ENCODE measurements at regions of chr1 and their contacts with region 1.

Region 1: GRCh38 chr1:43073490-43074230 is 98.4 kb downstream of the EBNA1BP2 start:
- DNase-seq: peak; percentile 81
- ATAC-seq: peak; percentile 91
- H3K4me3 Mint-ChIP-seq: no peak overlapping the region
- H3K27ac Mint-ChIP-seq: peak overlapping the region; percentile 63
- H3K4me1 Mint-ChIP-seq: peaks cover 4% of the 10 kb centered on the region
- H3K27me3 Mint-ChIP-seq: no peaks in the 10 kb centered on the region

Region 2: GRCh38 chr1:42766741-42767509 is 306.7 kb before region 1 on chr1 and contains the starts of genes C1orf50 and P3H1:
- CTCF ChIA-PET with region 1: interaction called, 21 read pairs
- DNase-seq: peak; percentile 100
- ATAC-seq: peak; percentile 94
- H3K4me3 Mint-ChIP-seq: no peak within 1 kb of the TSS
- H3K27ac Mint-ChIP-seq: no peak within 1 kb of the TSS
- H3K4me1 Mint-ChIP-seq: peaks cover 30% of the 10 kb centered on the region
- H3K27me3 Mint-ChIP-seq: no peaks in the 10 kb centered on the region
- total RNA-seq, gene C1orf50: 4.6 to 10.3 TPM
- total RNA-seq, gene P3H1: 48.1 to 54.0 TPM

Region 3: DNA sequence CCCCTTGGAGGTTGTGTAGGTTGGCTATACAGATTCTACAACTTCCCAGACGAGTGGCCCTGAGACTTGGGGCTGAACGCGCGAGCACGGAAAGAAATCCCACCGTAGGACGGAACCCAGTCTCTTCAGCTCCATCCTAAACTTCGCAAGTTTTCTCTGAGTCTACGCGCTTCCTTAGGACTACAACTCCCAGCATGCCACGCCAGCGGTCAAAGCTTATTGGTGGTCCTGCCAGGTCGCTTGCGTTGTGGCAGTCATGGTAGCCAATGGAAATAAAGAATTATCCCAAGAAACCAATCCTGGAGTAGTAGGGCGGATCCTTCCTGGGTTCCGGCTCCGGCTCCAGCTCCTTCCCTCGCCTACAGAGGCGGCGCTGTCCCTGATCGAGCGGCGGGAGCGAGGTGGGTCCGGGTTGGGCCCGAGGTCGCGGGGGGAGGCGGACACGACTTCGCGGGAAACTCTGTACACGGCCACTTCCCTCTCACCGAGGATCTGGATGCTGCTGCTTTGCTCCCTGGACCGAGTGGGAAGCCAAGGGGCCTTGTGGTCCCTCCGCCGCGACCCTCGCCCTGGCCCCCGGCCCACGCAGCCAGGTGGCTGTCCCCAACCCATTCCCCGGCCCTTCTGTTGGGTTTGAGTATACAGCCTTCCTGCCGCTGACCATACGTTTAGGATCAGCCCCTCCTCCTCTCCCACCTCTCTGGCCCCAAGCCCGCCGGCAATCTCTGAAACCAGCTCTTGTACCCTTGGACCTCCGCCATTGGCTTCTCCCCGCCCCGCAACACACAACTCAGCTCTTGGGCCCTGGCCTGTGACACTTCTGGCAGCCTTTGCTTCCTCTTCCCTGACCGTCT is 227.2 kb before region 1 on chr1 and contains the start of gene ZNF691:
- CTCF ChIA-PET with region 1: interaction called, 19 read pairs
- DNase-seq: peak; percentile 96
- ATAC-seq: peak; percentile 98
- H3K4me3 Mint-ChIP-seq: peak within 1 kb of the TSS; percentile 91
- H3K27ac Mint-ChIP-seq: peak within 1 kb of the TSS; percentile 81
- H3K4me1 Mint-ChIP-seq: peaks cover 34% of the 10 kb centered on the region
- H3K27me3 Mint-ChIP-seq: no peaks in the 10 kb centered on the region
- total RNA-seq, gene ZNF691: 9.8 to 13.9 TPM

Region 4: DNA sequence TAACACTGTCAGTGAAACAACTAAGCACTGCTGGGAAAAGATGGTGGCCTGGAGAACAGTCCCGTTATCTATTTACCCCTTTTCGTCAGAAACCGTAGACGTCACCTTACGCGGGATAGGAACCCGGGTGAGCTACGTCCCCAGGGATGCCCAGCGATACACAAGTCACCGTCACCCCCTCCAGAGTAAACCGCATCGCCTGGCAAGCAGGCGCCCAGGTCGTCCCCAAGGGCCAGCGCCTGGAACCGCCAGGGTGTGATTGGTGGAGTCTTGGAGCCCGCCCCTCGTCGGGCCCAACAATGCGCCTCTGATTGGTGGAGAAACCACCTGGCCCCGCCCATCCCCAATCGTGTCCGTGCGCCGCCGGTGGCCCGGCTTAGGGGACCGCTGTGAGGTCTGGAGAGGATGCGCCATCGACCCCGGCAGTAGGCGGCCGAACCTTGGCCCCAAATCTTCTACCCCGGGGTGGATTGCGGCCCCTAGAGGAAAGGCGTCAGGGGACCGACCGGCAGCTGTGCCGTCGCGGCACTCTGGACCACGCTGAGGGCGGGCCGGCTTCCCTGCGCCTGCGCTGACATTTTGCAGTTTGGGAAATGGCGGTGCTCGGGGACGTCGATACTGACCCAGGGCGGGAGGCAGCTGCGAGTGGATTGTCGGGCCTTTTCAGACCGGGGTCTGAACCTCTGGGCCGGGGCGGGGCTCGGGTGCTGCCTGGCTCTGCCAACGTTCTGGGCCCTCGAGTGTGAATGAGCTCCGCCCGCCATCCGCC is 149.4 kb before region 1 on chr1:
- CTCF ChIA-PET with region 1: interaction called, 275 read pairs
- DNase-seq: peak; percentile 96
- ATAC-seq: peak; percentile 93
- H3K4me3 Mint-ChIP-seq: peak overlapping the region; percentile 86
- H3K27ac Mint-ChIP-seq: peak overlapping the region; percentile 88
- H3K4me1 Mint-ChIP-seq: peaks cover 48% of the 10 kb centered on the region
- H3K27me3 Mint-ChIP-seq: no peaks in the 10 kb centered on the region

Region 5: DNA sequence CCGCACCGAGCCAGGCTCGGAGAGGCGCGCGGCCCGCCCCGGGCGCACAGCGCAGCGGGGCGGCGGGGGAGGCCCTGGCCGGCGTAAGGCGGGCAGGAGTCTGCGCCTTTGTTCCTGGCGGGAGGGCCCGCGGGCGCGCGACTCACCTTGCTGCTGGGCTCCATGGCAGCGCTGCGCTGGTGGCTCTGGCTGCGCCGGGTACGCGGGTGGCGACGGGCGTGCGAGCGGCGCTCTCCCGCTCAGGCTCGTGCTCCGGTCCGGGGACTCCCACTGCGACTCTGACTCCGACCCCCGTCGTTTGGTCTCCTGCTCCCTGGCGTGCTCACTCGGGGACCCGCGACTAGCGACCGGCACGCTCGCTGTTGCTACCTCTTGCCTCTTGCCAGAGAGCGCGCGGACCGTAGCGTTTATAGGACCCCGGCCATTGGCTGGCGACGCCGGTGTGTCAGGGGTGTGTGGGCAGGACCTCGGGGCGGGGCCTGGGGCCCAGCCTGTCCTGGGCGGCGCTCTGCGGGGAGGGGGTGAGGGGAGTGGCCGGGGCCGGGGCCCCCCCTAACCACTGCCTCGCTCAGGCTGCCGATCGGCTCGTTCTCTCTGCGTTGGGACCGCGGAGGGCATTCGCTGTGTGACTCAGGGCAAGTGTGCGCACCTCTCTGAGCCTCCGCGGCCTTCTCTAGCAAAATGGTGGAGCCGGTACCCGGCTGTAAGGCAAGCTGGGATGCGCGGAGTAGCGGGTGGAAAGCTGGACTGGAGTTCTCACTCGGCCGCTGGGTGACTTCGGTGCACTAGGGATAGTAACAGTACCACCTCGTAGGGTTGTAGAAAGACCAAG is 115.0 kb before region 1 on chr1 and contains the start of gene SLC2A1:
- CTCF ChIA-PET with region 1: interaction called, 26 read pairs
- DNase-seq: peak; percentile 98
- ATAC-seq: peak; percentile 87
- H3K4me3 Mint-ChIP-seq: peak within 1 kb of the TSS; percentile 95
- H3K27ac Mint-ChIP-seq: peak within 1 kb of the TSS; percentile 99
- H3K4me1 Mint-ChIP-seq: peaks cover 47% of the 10 kb centered on the region
- H3K27me3 Mint-ChIP-seq: peaks cover 8% of the 10 kb centered on the region
- total RNA-seq, gene SLC2A1: 113 to 140 TPM

Region 6: GRCh38 chr1:43059640-43060574 is 13.8 kb before region 1 on chr1:
- CTCF ChIA-PET with region 1: interaction called, 17 read pairs
- DNase-seq: no peak
- ATAC-seq: no peak
- H3K4me3 Mint-ChIP-seq: no peak overlapping the region
- H3K27ac Mint-ChIP-seq: no peak overlapping the region
- H3K4me1 Mint-ChIP-seq: peaks cover 29% of the 10 kb centered on the region
- H3K27me3 Mint-ChIP-seq: peaks cover 4% of the 10 kb centered on the region